ENCODE measurements at regions of chr9 and their contacts with region 1.

Region 1: GRCh38 chr9:110081395-110081794 is 126.6 kb downstream of the C9orf152 start:
- DNase-seq: no peak
- ATAC-seq: peak; percentile 36 to 86 (median 70)
- H3K4me3 ChIP-seq: no peak overlapping the region
- H3K27ac ChIP-seq: peak overlapping the region; percentile 52 to 91 (median 80)
- H3K4me1 ChIP-seq: peaks cover 9 to 91% (median 66%) of the 10 kb centered on the region in 9 donors
- H3K27me3 ChIP-seq: no peaks in the 10 kb centered on the region
- CTCF ChIP-seq: no peak

Region 2: DNA sequence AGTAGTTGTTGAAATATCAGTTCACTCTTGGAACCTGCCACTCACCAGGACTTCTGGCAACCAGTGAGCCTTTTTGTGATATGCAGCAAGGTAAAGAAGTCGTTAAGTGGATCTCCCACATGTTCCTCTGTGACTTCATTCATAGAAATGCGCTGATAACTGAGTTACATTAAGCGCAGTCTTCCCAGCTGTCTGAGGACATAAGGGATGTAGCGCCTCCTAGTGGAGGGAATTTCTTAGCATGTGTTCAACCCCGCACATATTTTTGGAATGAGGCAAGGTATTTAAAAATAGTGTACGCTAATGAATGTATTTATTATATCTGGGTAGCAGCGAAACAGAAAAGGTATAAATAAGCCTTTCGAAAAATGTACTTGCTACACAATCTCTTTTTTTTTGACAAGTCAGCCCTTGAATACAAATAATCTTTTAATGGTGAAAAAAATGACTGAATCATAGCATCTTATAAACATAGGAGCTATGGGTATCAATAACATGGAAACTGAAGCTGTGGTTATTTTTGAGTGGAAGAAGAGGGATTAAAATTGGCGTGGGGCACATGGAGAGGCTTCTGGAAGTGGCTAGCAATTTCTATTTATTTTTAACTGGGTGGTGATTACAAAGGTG is 263.4 kb before region 1 on chr9:
- intact Hi-C with region 1: no loop called
- DNase-seq: peak in 1 of 2 donors; percentile 92
- ATAC-seq: peak; percentile 62 to 91 (median 86)
- H3K4me3 ChIP-seq: peak overlapping the region in 3 of 10 donors; percentile 5 to 17 (median 15)
- H3K27ac ChIP-seq: peak overlapping the region; percentile 9 to 83 (median 70)
- H3K4me1 ChIP-seq: peaks cover 5 to 37% (median 32%) of the 10 kb centered on the region in 9 donors
- H3K27me3 ChIP-seq: no peaks in the 10 kb centered on the region
- CTCF ChIP-seq: peak; percentile 78 to 89 (median 83)

Region 3: GRCh38 chr9:110116543-110116885 is 35.1 kb after region 1 on chr9:
- intact Hi-C with region 1: loop called in 1 of 10 experiments (anchors 1 kb)
- DNase-seq: no peak
- ATAC-seq: peak in 5 of 8 donors; percentile 24 to 49 (median 45)
- H3K4me3 ChIP-seq: no peak overlapping the region
- H3K27ac ChIP-seq: peak overlapping the region in 3 of 10 donors; percentile 21 to 86 (median 72)
- H3K4me1 ChIP-seq: peaks cover 7 to 78% (median 48%) of the 10 kb centered on the region in 9 donors
- H3K27me3 ChIP-seq: no peaks in the 10 kb centered on the region
- CTCF ChIP-seq: no peak

Region 4: GRCh38 chr9:110125207-110125751 is 43.9 kb after region 1 on chr9:
- intact Hi-C with region 1: loop called in 1 of 10 experiments (anchors 5 kb)
- DNase-seq: peak; percentile 82 to 92
- ATAC-seq: peak; percentile 78 to 90 (median 86)
- H3K4me3 ChIP-seq: peak overlapping the region; percentile 25 to 53 (median 42)
- H3K27ac ChIP-seq: peak overlapping the region; percentile 78 to 94 (median 87)
- H3K4me1 ChIP-seq: peaks cover 20 to 100% (median 76%) of the 10 kb centered on the region in 9 donors
- H3K27me3 ChIP-seq: no peaks in the 10 kb centered on the region
- CTCF ChIP-seq: no peak

Region 5: GRCh38 chr9:110926828-110927487 is 845.6 kb after region 1 on chr9:
- intact Hi-C with region 1: no loop called
- DNase-seq: no peak
- ATAC-seq: no peak
- H3K4me3 ChIP-seq: no peak overlapping the region
- H3K27ac ChIP-seq: no peak overlapping the region
- H3K4me1 ChIP-seq: no peaks in the 10 kb centered on the region
- H3K27me3 ChIP-seq: no peaks in the 10 kb centered on the region
- CTCF ChIP-seq: no peak